Tibial artery (tissue), 4 donors: ENCODE measurements at regions of chr4 and their contacts with region 1.

Region 1: GRCh38 chr4:184649026-184649970 is at the starts of genes CASP3 and PRIMPOL:
- DNase-seq: peak; percentile 96 to 99
- H3K4me3 ChIP-seq: peak within 1 kb of the TSS; percentile 92 to 93
- H3K27ac ChIP-seq: peak within 1 kb of the TSS; percentile 99
- H3K4me1 ChIP-seq: peaks cover 0 to 46% (median 25%) of the 10 kb centered on the region in 4 donors
- H3K27me3 ChIP-seq: no peaks in the 10 kb centered on the region
- CTCF ChIP-seq: peak in 1 of 2 experiments; percentile 30

Region 2: GRCh38 chr4:182917182-182918043 is 1731.9 kb before region 1 on chr4 and contains the start of gene DCTD:
- intact Hi-C with region 1: loop called (anchors 10 kb)
- DNase-seq: peak; percentile 74 to 86
- H3K4me3 ChIP-seq: peak within 1 kb of the TSS; percentile 92
- H3K27ac ChIP-seq: peak within 1 kb of the TSS; percentile 92 to 95
- H3K4me1 ChIP-seq: peaks cover 0 to 19% (median 12%) of the 10 kb centered on the region in 4 donors
- H3K27me3 ChIP-seq: no peaks in the 10 kb centered on the region
- CTCF ChIP-seq: peak in 1 of 2 experiments; percentile 30

Region 3: DNA sequence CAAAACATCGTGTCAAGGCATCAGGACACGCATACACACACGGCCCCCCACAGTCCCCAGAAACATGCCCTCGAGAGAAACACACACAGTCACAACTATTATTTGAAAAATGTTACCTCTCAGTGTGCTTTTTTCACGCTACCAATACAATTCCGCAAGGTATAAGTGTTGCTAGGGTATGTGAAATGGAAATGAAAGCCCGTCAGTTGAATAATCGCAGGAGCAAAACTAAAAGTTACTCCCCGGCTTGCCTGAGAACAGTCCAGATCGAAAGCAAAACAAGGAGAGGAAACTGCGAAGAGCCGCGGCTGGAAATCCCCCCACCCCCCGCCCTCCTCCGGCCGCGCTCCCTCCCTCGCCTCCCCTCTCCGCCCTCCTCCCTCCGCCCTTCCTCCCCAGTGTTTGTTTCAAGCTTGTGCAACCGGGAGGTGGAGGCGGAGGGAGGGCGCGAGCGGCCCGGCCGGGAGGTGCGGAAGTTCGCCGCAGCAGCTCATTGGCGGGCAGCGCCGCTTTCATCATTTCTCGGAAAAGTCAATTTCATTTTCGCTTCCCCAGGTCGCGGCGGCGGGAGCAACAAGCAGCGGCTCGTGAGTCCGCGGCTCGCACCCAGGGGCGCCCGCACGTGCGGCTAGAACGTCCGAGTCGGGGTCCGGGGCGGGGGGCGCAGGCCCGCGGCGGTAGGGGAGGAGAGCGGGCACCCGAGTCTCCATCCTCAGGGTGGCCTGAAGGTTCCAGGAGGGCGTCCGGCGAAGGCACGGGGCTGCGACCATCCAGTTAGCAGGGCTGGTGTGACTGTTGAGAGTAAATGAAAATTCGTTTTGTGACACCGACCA is 174.8 kb before region 1 on chr4 and contains the start of gene IRF2:
- intact Hi-C with region 1: loop called (anchors 5 kb)
- DNase-seq: peak; percentile 97 to 99
- H3K4me3 ChIP-seq: peak within 1 kb of the TSS; percentile 80 to 89
- H3K27ac ChIP-seq: peak within 1 kb of the TSS; percentile 88 to 96
- H3K4me1 ChIP-seq: peaks cover 0 to 48% (median 26%) of the 10 kb centered on the region in 4 donors
- H3K27me3 ChIP-seq: no peaks in the 10 kb centered on the region
- CTCF ChIP-seq: peak in 1 of 2 experiments; percentile 17

Region 4: GRCh38 chr4:184538023-184538599 is 111.2 kb before region 1 on chr4:
- intact Hi-C with region 1: loop called (anchors 5 kb)
- DNase-seq: peak; percentile 92
- H3K4me3 ChIP-seq: peak overlapping the region; percentile 60 to 66
- H3K27ac ChIP-seq: peak overlapping the region; percentile 93
- H3K4me1 ChIP-seq: peaks cover 0 to 31% (median 12%) of the 10 kb centered on the region in 4 donors
- H3K27me3 ChIP-seq: no peaks in the 10 kb centered on the region
- CTCF ChIP-seq: peak; percentile 72 to 80

Region 5: GRCh38 chr4:184733654-184734524 is 84.6 kb after region 1 on chr4 and contains the start of gene CENPU:
- intact Hi-C with region 1: loop called (anchors 5 kb)
- DNase-seq: peak; percentile 93 to 98
- H3K4me3 ChIP-seq: peak within 1 kb of the TSS; percentile 75 to 88
- H3K27ac ChIP-seq: peak within 1 kb of the TSS; percentile 41 to 74
- H3K4me1 ChIP-seq: peaks cover 0 to 11% (median 10%) of the 10 kb centered on the region in 4 donors
- H3K27me3 ChIP-seq: peaks cover 0 to 3% of the 10 kb centered on the region in 2 donors
- CTCF ChIP-seq: no peak

Region 6: DNA sequence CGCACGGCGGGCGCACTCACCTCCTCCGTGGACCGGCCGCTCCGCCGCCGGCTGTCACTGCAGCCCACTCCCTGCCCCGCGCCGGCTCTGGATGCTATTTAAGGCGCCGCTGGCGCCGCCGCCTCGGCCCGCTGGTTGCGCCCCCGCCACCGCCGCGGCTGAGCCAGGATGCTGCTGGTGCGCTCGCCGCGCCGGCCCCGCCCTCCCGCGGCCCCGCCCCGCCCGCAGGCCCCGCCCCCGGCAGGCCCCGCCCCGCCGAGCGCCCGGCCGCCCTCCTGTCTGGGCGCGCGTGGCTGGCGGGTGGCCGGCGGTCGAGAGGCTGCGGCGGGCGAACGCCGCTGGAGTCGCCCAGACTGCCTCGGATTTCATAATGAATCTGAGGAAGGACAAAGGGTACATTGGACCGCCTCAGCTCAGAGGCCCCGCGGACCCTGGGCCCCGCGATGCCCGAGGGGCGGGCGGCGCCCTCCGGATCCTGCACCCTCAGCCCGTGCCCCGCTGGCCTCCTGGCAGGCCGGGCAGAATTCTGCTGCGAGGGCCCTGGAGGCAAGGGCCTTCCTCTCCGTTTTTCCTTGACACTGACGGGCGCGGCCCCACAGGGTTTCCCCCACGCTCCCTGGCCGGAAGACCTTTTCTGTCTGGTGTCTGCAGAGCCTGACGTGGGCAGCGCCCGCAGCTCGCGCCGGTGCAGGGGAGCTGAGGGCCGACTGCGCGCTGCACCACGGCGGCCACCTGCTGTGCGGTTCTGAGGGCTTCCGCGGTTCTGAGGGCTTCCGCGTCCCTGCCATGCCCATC is 176.8 kb after region 1 on chr4 and contains the start of gene ACSL1:
- intact Hi-C with region 1: loop called (anchors 5 kb)
- DNase-seq: peak; percentile 85 to 92
- H3K4me3 ChIP-seq: peak within 1 kb of the TSS; percentile 56 to 72
- H3K27ac ChIP-seq: peak within 1 kb of the TSS; percentile 81
- H3K4me1 ChIP-seq: peaks cover 0 to 22% (median 10%) of the 10 kb centered on the region in 4 donors
- H3K27me3 ChIP-seq: no peaks in the 10 kb centered on the region
- CTCF ChIP-seq: peak in 1 of 2 experiments; percentile 11

Region 7: GRCh38 chr4:185304944-185305690 is 655.8 kb after region 1 on chr4:
- intact Hi-C with region 1: no loop called
- DNase-seq: no peak
- H3K4me3 ChIP-seq: no peak overlapping the region
- H3K27ac ChIP-seq: no peak overlapping the region
- H3K4me1 ChIP-seq: peaks cover 0 to 10% (median 0%) of the 10 kb centered on the region in 4 donors
- H3K27me3 ChIP-seq: no peaks in the 10 kb centered on the region
- CTCF ChIP-seq: no peak